Caco-2 (cell line): ENCODE measurements at regions of chr17 and their contacts with region 1.

Region 1: DNA sequence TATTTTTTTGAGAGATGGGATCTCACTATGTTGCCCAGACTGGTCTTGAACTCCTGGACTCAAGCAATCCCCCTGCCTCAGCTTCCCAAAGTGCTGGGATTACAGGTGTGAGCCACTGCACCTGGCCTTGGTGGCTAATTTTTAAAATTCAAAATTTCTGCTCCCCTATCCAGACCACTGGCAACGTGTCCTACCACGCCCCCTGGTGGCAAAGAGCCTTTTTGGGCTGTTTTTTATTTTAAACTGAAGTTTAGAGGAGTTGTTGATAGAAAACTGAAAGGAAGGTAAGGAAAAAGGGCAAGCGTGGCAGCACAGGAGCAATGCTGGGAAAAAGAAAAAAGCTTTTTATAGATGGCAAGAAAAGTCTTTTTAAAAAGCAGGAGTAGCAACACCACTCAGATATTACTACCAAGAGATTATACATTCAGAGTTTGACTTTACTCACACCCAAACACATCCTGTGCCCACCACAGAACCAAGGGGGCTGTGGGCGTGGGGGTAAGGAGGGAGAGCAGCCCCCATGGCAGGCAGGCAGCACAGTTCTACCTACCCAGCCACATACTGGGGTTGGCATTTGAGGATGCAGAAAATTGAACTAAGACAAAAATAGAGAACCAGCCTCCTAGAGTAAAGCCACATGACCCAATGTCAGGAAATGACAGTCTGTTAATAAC is 4.2 kb upstream of the MXRA7 start:
- DNase-seq: peak; percentile 66 to 84
- H3K4me3 ChIP-seq: no peak overlapping the region
- H3K4me3 Mint-ChIP-seq: no peak overlapping the region
- H3K27ac Mint-ChIP-seq: no peak overlapping the region
- H3K4me1 ChIP-seq: peaks cover 5% of the 10 kb centered on the region; the same call in 1 of the 2 replicates
- H3K4me1 Mint-ChIP-seq: peaks cover 13% of the 10 kb centered on the region
- H3K27me3 ChIP-seq: no peaks in the 10 kb centered on the region
- H3K27me3 Mint-ChIP-seq: no peaks in the 10 kb centered on the region
- CTCF ChIP-seq: peak; percentile 82 to 89

Region 2: GRCh38 chr17:76650504-76650903 is 64.5 kb before region 1 on chr17:
- CTCF ChIA-PET with region 1: no interaction called
- POLR2A ChIA-PET with region 1: no interaction called
- intact Hi-C with region 1: no loop called
- DNase-seq: no peak
- H3K4me3 ChIP-seq: no peak overlapping the region
- H3K4me3 Mint-ChIP-seq: no peak overlapping the region
- H3K27ac Mint-ChIP-seq: no peak overlapping the region
- H3K4me1 ChIP-seq: no peaks in the 10 kb centered on the region; the same call in 1 of the 2 replicates
- H3K4me1 Mint-ChIP-seq: peaks cover 15% of the 10 kb centered on the region
- H3K27me3 ChIP-seq: no peaks in the 10 kb centered on the region
- H3K27me3 Mint-ChIP-seq: no peaks in the 10 kb centered on the region
- CTCF ChIP-seq: no peak

Region 3: DNA sequence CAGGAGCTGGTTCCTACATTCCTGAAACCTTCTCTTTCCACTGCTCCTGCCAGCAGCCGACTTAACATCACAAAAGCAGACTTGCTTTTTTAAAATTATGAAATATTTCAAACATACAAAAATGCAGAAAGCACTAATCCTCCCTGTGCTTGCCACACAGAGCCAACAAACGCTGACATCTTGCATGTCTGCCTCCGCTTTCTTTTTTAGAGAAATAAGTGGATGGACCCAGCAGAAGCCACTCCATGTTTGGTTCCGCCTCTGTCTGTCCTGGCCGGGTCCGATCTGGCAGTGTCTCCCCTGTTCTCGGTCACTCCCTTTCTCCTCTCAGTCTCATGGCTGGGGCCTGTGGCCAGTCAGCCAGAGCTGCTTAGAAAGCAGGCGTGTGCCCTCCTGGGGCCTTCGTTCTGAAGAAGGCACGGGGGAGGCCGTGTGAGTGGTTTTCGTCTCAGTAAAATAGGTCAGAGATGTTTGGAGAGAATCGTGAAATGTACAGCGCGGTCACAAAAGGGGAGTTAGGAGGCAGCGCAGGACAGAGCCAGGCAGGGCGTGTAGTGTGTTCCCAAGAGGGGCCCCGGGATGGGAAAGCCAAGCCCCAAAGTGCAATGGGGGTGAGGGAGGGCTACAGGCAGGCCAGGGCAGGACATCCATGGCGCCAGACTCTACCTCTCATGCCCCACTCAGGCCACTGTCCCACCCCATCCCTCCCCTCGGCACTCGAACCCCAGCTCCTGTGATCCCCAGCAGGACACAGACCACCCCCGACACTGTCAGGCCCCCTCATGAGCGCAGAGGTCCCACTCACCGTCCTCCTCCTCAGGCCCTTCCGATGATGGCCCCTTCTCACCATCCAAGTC is 27.4 kb before region 1 on chr17:
- CTCF ChIA-PET with region 1: interaction called, 6 read pairs
- POLR2A ChIA-PET with region 1: no interaction called
- intact Hi-C with region 1: loop called (anchors 2 kb)
- DNase-seq: no peak
- H3K4me3 ChIP-seq: no peak overlapping the region
- H3K4me3 Mint-ChIP-seq: no peak overlapping the region
- H3K27ac Mint-ChIP-seq: peak overlapping the region; percentile 22
- H3K4me1 ChIP-seq: peaks cover 30% of the 10 kb centered on the region
- H3K4me1 Mint-ChIP-seq: peaks cover 18% of the 10 kb centered on the region
- H3K27me3 ChIP-seq: no peaks in the 10 kb centered on the region
- H3K27me3 Mint-ChIP-seq: no peaks in the 10 kb centered on the region
- CTCF ChIP-seq: no peak

Region 4: DNA sequence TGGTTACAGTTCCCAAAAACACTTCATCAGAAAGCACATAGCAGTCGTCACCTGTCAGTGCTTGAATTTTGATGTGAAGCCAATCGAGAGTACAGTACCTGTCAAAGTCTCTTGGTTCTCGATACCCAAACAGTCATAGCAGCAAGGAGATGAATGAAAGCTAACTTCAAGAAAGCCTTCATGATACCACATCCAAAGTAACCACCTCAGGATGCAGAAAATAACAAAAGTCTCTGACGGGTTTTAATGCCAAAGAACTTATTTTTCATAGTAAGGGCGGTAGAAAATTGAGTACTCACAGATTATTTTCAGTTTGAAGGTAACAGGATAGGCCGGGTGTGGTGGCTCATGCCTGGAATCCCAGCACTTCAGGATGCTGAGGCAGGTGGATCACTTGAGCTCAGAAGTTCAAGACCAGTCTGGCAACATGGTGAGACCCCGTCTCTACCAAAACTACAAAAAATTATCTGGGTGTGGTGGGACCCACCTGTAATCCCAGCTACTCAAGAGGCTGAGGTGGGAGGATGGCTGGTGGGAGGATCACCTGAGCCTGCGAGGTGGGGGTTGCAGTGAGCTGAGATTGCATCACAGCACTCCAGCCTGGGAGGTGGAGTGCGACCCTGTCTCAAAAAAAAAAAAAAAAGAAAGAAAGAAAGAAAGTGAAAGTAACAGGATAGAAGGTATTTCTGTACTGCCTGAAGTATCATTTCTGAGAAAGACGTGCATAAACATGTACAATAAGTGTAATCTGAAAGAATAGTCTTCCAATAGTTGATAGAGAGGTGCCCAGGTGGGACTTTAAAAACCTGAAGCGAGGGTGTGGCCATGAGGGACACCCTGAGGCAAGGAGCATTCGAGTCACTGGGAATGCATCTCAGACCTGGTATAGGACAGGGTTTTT is 38.4 kb after region 1 on chr17:
- CTCF ChIA-PET with region 1: no interaction called
- POLR2A ChIA-PET with region 1: no interaction called
- intact Hi-C with region 1: no loop called
- DNase-seq: no peak
- H3K4me3 ChIP-seq: no peak overlapping the region
- H3K4me3 Mint-ChIP-seq: no peak overlapping the region
- H3K27ac Mint-ChIP-seq: peak overlapping the region; percentile 9
- H3K4me1 ChIP-seq: no peaks in the 10 kb centered on the region
- H3K4me1 Mint-ChIP-seq: peaks cover 7% of the 10 kb centered on the region
- H3K27me3 ChIP-seq: no peaks in the 10 kb centered on the region
- H3K27me3 Mint-ChIP-seq: no peaks in the 10 kb centered on the region
- CTCF ChIP-seq: no peak